ENCODE measurements at regions of chr9 and their contacts with region 1.

Region 1: DNA sequence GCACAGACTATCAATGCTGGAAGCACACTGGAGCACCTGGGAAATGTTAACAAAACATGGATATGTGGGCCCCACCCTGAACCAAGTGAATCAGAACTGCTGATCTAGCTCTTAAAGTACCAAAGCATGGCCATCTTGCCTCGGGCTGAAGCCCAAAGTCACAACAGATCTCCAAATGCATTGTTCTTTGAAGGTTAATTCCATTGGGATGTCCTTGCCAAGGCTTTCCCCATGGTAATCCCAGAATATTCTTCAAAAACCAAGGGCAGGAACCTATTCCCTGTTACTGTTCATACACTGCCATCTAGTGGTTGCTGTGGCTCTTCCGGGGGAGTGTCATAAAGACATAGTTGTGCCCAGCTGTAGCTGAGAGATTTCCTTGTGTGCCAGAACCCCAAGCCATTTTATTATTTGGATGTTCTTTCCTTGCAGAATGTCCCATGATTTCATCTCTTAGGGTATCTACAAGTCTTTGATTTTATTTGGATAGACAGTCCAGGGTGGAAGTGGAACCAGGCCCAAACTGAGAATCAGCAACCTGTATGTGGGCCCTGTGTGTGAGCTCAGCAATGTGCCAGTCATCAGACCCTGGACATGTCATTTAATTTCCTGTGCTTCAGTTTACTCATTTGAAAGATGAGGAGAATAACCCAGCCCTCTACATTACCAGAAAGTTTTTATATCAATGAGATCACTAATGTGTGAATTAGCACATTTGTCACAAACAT is 290.0 kb downstream of the ACTL7B start:
- DNase-seq: peak; percentile 45
- H3K4me3 ChIP-seq: no peak overlapping the region
- CTCF ChIP-seq: peak; percentile 70

Region 2: GRCh38 chr9:107425101-107426045 is 1140.4 kb before region 1 on chr9:
- CTCF ChIA-PET with region 1: interaction called, 14 read pairs
- POLR2A ChIA-PET with region 1: no interaction called
- DNase-seq: no peak
- H3K4me3 ChIP-seq: peak overlapping the region; percentile 27
- CTCF ChIP-seq: peak; percentile 92

Region 3: DNA sequence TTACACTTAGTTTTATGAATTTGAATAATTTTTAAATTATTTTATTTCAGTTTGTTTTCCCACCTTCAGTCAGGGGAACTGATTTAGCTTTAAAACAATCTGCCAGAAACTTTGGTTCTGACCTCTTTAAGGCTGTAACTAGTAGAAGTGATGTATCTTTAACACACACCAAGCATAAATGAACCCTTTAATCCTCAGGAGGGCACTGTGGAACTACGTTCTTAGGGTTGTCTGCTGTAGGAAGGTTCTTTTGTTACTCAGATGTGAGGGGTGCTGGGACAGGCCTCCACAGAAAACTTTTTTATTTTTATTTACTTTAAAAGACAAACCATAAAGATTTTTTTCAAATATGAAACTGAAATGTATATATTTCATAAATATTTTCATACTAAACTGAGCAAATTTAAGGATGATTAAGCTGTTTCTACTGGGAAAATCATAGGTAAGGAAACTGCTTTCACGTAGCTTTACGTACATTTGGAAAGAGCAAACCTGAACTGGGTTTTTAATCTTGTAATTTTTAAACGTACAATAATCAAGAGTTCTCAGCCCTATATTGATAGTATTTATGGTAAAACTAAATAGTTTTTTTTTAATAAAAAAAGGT is 1081.6 kb before region 1 on chr9:
- CTCF ChIA-PET with region 1: interaction called, 40 read pairs
- POLR2A ChIA-PET with region 1: no interaction called
- DNase-seq: peak; percentile 34
- H3K4me3 ChIP-seq: no peak overlapping the region
- CTCF ChIP-seq: peak; percentile 61

Region 4: DNA sequence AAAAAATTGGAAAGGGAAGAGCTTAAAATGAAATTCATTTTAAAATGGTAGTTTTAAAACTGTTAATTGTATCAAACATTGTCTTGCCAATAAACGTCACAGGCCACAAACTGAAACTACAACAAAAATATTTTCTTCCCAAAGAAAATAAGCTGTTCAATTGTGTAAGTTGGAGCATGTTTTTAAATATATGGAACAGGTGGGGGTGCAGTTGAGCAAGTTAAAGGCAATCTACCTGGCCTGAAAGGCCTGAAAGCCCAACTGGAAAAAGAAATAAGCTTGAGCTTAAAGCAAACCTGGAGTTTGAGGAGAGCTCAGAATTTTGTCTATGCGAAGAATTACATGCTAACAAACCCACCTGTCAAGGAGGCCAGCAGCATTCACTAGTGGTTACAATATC is 149.5 kb before region 1 on chr9:
- CTCF ChIA-PET with region 1: interaction called, 15 read pairs
- POLR2A ChIA-PET with region 1: no interaction called
- DNase-seq: no peak
- H3K4me3 ChIP-seq: no peak overlapping the region
- CTCF ChIP-seq: no peak

Region 5: GRCh38 chr9:108551030-108551838 is 14.6 kb before region 1 on chr9:
- CTCF ChIA-PET with region 1: interaction called, 11 read pairs
- POLR2A ChIA-PET with region 1: no interaction called
- DNase-seq: peak; percentile 67
- H3K4me3 ChIP-seq: no peak overlapping the region
- CTCF ChIP-seq: no peak

Region 6: DNA sequence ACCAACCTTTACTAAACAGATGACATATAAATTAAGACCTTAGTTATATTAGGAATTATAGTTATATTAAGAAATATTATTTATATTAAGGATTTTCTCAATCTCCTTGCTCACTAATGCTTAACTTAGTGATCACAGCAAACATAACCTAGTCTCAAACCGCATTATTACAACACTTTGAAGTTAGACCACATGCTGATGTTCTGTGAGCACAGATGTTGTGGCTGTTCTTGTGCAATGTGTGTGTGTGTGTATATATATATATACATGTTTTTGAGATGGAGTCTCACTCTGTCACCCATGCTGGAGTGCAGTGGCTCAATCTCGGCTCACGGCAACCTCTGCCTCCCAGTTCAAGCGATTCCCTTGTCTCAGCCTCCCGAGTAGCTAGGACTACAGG is 347.6 kb after region 1 on chr9:
- CTCF ChIA-PET with region 1: no interaction called
- POLR2A ChIA-PET with region 1: no interaction called
- DNase-seq: no peak
- H3K4me3 ChIP-seq: no peak overlapping the region
- CTCF ChIP-seq: no peak

Measured in AG04449 (cell line).